Brain microvascular endothelial cell (primary cell): ENCODE measurements at regions of chr17 and their contacts with region 1.

Region 1: GRCh38 chr17:9522074-9522473 is 53.5 kb downstream of the STX8 start:
- DNase-seq: peak; percentile 58
- H3K4me3 ChIP-seq: no peak overlapping the region
- H3K27ac ChIP-seq: no peak overlapping the region
- H3K27me3 ChIP-seq: no peaks in the 10 kb centered on the region
- CTCF ChIP-seq: peak; percentile 69

Region 2: GRCh38 chr17:9115446-9116191 is 406.5 kb before region 1 on chr17:
- in situ Hi-C with region 1: no loop called
- DNase-seq: peak; percentile 36
- H3K4me3 ChIP-seq: peak overlapping the region; percentile 46
- H3K27ac ChIP-seq: no peak overlapping the region
- H3K27me3 ChIP-seq: no peaks in the 10 kb centered on the region
- CTCF ChIP-seq: peak; percentile 49

Region 3: DNA sequence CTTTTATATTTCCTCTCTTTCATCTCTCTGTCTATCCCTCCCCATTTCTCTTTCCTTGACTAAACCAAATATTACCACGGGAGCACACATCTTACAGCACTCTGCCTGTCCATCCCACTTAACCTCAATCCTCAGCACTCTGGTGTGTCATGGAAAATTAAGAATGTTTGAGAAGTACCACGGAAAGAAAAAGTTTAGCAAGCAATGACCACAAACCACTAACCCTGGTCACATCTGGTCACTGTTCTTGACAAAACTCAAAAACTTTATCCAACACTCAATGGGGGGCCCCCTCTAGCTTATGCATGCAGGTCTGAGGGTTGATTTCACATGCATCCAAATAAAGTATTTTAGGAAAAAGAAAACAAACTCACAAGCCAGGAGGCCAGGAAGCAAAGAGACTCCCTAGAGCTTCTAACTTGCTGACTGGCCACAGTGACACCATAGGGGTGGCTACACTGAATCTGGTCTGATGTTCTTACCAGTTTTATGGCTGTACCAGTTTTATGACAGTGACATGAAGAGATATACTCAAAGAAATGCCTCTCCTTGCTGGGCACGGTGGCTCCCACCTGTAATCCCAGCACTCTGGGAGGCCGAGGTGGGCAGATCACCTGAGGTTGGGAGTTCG is 175.7 kb before region 1 on chr17:
- in situ Hi-C with region 1: loop called (anchors 25 kb)
- DNase-seq: peak; percentile 54
- H3K4me3 ChIP-seq: no peak overlapping the region
- H3K27ac ChIP-seq: peak overlapping the region; percentile 11
- H3K27me3 ChIP-seq: no peaks in the 10 kb centered on the region
- CTCF ChIP-seq: no peak